Calu3 (cell line): ENCODE measurements at regions of chr1 and their contacts with region 1.

Region 1: GRCh38 chr1:202501281-202501680 is 152.8 kb downstream of the PPP1R12B start:
- DNase-seq: peak; percentile 24
- H3K4me3 Mint-ChIP-seq: no peak overlapping the region
- H3K27ac Mint-ChIP-seq: no peak overlapping the region
- H3K4me1 Mint-ChIP-seq: no peaks in the 10 kb centered on the region
- H3K27me3 Mint-ChIP-seq: no peaks in the 10 kb centered on the region
- CTCF ChIP-seq: peak; percentile 29

Region 2: DNA sequence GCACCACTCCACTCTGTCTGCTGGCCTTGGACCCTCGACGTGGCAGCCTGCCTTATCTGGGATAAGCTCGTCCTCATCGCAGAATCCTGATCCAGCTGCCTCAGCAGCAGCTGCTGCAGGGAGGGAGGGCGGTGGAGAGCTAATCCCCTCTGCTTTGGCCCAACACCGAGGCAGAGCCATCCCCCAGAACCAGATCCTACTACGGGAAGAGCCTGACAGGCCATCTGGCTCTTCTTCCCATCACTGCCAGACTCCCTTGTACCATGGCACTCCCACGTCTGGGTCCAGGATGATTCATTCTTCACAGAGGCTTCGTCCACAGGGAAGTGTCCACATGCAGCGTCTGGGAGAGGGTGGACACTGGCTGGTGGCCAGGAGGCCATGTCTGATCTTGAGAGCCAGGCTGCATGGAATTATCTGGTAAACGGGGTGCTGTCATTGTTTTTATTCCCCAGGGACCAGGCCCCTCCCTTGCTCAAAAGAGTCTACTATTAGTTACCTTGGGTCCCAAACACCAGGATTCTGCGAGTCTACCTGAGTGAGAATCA is 1232.6 kb before region 1 on chr1:
- CTCF ChIA-PET with region 1: no interaction called
- intact Hi-C with region 1: no loop called
- DNase-seq: peak; percentile 48
- H3K4me3 Mint-ChIP-seq: no peak overlapping the region
- H3K27ac Mint-ChIP-seq: peak overlapping the region; percentile 40
- H3K4me1 Mint-ChIP-seq: peaks cover 42% of the 10 kb centered on the region
- H3K27me3 Mint-ChIP-seq: no peaks in the 10 kb centered on the region
- CTCF ChIP-seq: no peak

Region 3: GRCh38 chr1:202221911-202222909 is 279.1 kb before region 1 on chr1:
- CTCF ChIA-PET with region 1: no interaction called
- intact Hi-C with region 1: no loop called
- DNase-seq: no peak
- H3K4me3 Mint-ChIP-seq: no peak overlapping the region
- H3K27ac Mint-ChIP-seq: no peak overlapping the region
- H3K4me1 Mint-ChIP-seq: no peaks in the 10 kb centered on the region
- H3K27me3 Mint-ChIP-seq: peaks cover 99% of the 10 kb centered on the region
- CTCF ChIP-seq: no peak

Region 4: GRCh38 chr1:202329891-202330290 is 171.4 kb before region 1 on chr1:
- CTCF ChIA-PET with region 1: no interaction called
- intact Hi-C with region 1: no loop called
- DNase-seq: no peak
- H3K4me3 Mint-ChIP-seq: no peak overlapping the region
- H3K27ac Mint-ChIP-seq: no peak overlapping the region
- H3K4me1 Mint-ChIP-seq: no peaks in the 10 kb centered on the region
- H3K27me3 Mint-ChIP-seq: no peaks in the 10 kb centered on the region
- CTCF ChIP-seq: no peak

Region 5: DNA sequence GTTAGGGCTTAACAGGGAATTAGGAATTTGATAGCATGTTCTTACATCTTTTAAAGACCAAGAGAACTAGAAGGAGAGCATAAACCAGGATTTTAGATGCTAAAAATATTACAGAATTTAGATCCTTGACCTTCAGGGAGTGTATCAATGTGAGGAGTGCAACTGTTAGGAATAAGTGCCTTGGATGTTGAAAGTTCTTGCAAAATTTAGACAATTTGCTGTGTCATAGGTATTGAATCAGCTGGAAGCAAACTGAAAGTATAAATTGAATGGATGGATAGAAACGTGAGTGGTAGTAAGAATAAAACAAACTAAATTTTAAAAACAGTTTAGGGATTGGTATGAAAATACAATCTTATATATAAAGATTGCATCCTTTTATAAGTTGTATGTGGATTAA is 125.0 kb before region 1 on chr1:
- CTCF ChIA-PET with region 1: no interaction called
- intact Hi-C with region 1: no loop called
- DNase-seq: no peak
- H3K4me3 Mint-ChIP-seq: no peak overlapping the region
- H3K27ac Mint-ChIP-seq: no peak overlapping the region
- H3K4me1 Mint-ChIP-seq: peaks cover 30% of the 10 kb centered on the region
- H3K27me3 Mint-ChIP-seq: no peaks in the 10 kb centered on the region
- CTCF ChIP-seq: no peak

Region 6: DNA sequence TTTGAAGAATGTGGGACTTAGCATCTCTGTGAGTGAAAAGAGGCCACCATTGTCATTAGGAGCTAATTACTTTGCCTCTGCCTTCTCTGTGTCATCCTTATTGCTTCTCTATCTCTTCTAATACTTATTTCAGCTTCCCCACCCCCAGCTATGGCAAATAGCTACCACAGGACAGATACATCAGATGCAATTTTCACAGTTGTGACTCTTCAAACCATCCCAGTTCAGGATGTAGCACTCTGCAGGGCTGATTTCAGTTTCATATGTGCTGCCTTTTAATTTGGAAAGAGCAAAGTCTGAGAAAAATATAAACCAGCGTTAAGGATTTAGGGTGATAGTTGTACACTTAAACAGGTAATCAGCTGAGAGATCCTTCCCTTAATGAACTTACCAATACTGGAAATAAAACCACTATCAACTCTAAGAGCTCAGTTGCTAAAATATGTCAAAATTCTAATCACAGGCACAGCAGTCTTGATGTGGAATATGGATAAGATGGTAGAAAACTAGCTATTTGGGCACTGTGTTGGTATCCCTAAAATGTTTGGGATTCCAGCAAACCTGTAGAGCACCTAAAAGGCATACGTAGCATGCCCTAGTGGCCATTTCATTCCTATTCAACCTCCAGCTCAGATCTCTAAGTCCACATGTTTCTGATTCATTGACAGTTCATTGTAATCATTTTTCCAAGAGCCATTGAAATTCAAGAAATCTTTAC is 60.6 kb after region 1 on chr1:
- CTCF ChIA-PET with region 1: no interaction called
- intact Hi-C with region 1: loop called (anchors 2 kb)
- DNase-seq: no peak
- H3K4me3 Mint-ChIP-seq: no peak overlapping the region
- H3K27ac Mint-ChIP-seq: no peak overlapping the region
- H3K4me1 Mint-ChIP-seq: no peaks in the 10 kb centered on the region
- H3K27me3 Mint-ChIP-seq: no peaks in the 10 kb centered on the region
- CTCF ChIP-seq: no peak

Region 7: DNA sequence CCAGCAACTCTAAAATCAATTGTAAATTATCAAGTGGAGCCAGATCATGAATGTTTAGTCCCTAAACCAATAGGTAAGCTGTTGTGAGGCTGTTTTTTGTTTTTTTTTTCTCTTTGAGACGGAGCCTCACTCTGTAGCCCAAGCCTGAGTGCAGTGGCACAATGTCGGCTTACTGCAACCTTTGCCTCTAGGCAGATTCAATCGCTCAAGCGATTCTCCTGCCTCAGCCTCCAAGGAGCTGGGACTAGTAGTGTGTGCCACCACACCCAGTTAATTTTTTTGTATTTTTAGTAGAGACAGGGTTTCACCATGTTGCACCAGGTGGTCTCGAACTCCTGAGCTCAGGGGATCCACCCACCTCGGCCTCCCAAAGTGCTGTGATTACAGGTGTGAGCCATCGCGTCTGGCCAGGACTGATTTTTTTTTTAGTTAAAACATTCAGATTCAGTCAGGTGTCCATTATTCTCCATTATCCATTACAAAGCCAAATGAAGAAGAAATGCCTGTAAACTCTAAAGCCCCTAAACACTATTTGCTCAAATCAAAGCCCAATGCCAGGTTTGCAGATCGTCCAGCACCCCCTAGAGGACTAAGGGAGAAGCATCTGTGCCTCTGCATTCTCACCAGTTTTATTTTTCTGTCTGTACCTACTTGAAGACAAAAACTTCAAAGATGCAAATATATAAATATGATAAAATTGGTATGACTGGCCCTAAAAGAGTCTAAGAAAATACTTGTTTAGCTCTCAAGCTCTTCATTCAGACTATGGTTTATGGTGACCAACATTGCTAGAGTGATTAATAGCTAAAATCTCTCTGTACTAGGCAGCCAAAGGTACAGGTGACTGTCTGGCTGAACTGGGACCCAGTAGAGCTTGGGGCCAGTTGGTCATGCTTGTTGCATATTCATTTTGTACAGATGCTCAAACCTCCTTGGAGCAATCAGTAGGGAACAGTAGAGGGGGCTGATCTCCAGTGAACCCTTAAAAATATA is 70.4 kb after region 1 on chr1:
- CTCF ChIA-PET with region 1: interaction called, 6 read pairs
- intact Hi-C with region 1: loop called (anchors 2 kb)
- DNase-seq: peak; percentile 60
- H3K4me3 Mint-ChIP-seq: no peak overlapping the region
- H3K27ac Mint-ChIP-seq: no peak overlapping the region
- H3K4me1 Mint-ChIP-seq: no peaks in the 10 kb centered on the region
- H3K27me3 Mint-ChIP-seq: no peaks in the 10 kb centered on the region
- CTCF ChIP-seq: peak; percentile 75

Region 8: DNA sequence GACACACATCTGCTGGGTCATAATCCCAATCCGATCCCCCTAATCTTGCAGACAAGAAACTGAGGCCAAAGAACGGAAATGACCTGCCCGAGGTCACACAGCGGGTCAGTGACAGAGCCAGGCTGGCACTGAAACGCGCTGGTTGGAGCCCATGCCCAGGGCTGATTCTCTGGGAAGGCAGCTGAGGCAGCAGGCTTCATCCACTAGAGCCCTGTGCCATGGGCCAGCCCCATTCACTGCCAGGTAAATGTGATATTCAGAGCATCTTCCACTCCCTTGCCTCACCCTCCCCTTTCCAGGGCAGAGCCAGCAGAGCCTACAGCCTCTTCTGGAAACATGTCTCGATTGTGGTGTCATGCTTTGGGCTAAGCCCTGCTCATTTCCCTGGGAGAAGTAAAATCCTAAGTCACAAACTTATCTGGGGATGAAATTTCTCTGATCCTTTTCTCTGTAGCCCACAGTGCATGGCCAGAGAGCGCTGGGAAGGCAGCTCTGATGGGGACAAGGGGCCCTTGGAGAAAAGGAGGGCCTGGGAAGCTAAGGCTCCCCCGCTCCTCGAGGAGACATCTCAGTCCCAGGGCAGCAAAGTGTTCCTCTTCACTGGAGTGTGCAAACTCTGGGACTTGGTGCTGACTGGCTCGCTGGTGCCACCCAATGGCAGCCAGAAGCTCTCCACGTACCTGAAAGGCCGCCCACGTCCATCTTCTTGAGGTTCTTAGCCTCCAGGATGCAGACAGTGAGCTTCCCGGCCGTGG is 98.6 kb after region 1 on chr1:
- CTCF ChIA-PET with region 1: interaction called, 17 read pairs
- intact Hi-C with region 1: loop called (anchors 1 kb)
- DNase-seq: peak; percentile 80
- H3K4me3 Mint-ChIP-seq: no peak overlapping the region
- H3K27ac Mint-ChIP-seq: no peak overlapping the region
- H3K4me1 Mint-ChIP-seq: no peaks in the 10 kb centered on the region
- H3K27me3 Mint-ChIP-seq: no peaks in the 10 kb centered on the region
- CTCF ChIP-seq: peak; percentile 83